Gastrocnemius medialis (tissue), 4 donors: ENCODE measurements at regions of chr1 and their contacts with region 1.

Region 1: GRCh38 chr1:67832737-67833601 is at the start of gene GNG12:
- DNase-seq: peak; percentile 52 to 59
- ATAC-seq: peak; percentile 76 to 77
- H3K4me3 ChIP-seq: peak within 1 kb of the TSS; percentile 63 to 81 (median 77)
- H3K27ac ChIP-seq: peak within 1 kb of the TSS; percentile 77 to 86 (median 82)
- H3K4me1 ChIP-seq: peaks cover 19 to 20% of the 10 kb centered on the region in 2 donors
- H3K27me3 ChIP-seq: no peaks in the 10 kb centered on the region
- CTCF ChIP-seq: no peak
- POLR2A ChIP-seq: peak; percentile 21 to 50
- total RNA-seq, gene GNG12: 17.9 to 24.5 (median 22.1) TPM

Region 2: DNA sequence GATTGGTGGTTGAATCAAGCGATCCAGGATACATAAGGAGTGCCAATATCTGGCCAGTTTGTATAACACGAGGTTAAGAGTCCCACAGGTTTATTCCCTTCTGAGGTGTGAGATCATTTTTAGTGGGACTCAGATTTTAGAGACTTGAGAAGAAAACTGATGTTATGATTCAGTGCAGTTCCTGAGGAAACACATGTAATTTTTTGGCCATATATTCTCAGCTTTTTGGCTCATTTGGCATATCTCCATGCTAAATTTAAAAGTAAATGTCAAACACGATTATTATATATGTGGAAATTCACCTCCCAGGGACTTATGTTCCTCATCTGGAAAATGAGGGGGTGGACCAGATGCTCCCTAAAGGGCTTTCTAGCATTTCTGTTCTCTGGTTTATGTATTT is 363.5 kb before region 1 on chr1:
- in situ Hi-C with region 1: no loop called
- intact Hi-C with region 1: no loop called
- DNase-seq: no peak
- ATAC-seq: no peak
- H3K4me3 ChIP-seq: no peak overlapping the region
- H3K27ac ChIP-seq: peak overlapping the region in 1 of 4 donors; percentile 70
- H3K4me1 ChIP-seq: peaks cover 18 to 26% of the 10 kb centered on the region in 2 donors
- H3K27me3 ChIP-seq: no peaks in the 10 kb centered on the region
- CTCF ChIP-seq: no peak
- POLR2A ChIP-seq: no peak

Region 3: GRCh38 chr1:67535474-67535873 is 297.5 kb before region 1 on chr1:
- in situ Hi-C with region 1: no loop called
- intact Hi-C with region 1: loop called (anchors 10 kb)
- DNase-seq: peak; percentile 59 to 74
- ATAC-seq: peak; percentile 82 to 92
- H3K4me3 ChIP-seq: no peak overlapping the region
- H3K27ac ChIP-seq: no peak overlapping the region
- H3K4me1 ChIP-seq: peaks cover 6% of the 10 kb centered on the region in 2 donors
- H3K27me3 ChIP-seq: no peaks in the 10 kb centered on the region
- CTCF ChIP-seq: peak; percentile 91 to 97 (median 92)
- POLR2A ChIP-seq: no peak

Region 4: DNA sequence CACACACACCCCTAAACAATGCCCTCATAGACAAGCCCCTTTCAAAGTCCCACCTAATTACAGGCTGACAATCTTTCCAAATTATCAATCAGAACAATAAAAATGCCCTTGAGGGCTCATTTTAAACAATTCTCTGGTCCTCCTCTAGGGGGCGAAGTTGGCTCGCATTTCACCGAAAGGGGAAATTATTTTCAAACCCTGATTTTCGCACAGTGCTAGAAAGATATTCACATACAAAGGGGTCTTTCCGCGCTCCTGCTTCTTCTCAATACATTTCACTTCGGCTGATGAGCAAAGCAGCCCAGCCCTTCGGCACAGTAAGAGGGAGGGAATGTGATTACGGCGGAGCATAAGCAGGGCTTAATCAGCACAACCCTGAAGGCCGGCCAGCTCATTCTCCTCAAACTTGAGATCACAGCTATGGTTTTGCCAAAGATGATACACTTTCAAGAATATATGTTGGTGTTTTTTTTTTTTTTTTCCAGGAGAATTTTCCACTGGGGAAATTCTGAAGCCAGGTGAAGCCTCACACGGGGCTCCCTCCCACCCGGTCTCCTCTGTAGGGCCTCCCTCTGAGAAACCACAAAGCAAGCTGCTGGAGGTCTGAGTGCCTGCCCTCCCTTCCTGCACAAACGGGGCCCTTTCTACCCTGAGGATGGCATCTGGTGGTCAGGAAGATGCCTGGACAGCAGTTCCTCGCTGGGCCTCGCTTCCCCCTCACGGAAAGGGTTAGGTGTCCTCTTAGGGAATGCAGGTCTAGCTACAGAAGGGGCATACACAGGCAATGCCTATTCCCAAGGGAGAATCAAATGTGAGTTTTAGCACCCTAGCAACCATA is 66.6 kb before region 1 on chr1:
- in situ Hi-C with region 1: no loop called
- intact Hi-C with region 1: loop called (anchors 5 kb)
- DNase-seq: peak in 1 of 2 donors; percentile 16
- ATAC-seq: peak; percentile 53 to 68
- H3K4me3 ChIP-seq: peak overlapping the region in 3 of 4 donors; percentile 21 to 48 (median 39)
- H3K27ac ChIP-seq: no peak overlapping the region
- H3K4me1 ChIP-seq: peaks cover 0 to 6% of the 10 kb centered on the region in 2 donors
- H3K27me3 ChIP-seq: no peaks in the 10 kb centered on the region
- CTCF ChIP-seq: peak; percentile 64 to 85 (median 75)
- POLR2A ChIP-seq: no peak

Region 5: DNA sequence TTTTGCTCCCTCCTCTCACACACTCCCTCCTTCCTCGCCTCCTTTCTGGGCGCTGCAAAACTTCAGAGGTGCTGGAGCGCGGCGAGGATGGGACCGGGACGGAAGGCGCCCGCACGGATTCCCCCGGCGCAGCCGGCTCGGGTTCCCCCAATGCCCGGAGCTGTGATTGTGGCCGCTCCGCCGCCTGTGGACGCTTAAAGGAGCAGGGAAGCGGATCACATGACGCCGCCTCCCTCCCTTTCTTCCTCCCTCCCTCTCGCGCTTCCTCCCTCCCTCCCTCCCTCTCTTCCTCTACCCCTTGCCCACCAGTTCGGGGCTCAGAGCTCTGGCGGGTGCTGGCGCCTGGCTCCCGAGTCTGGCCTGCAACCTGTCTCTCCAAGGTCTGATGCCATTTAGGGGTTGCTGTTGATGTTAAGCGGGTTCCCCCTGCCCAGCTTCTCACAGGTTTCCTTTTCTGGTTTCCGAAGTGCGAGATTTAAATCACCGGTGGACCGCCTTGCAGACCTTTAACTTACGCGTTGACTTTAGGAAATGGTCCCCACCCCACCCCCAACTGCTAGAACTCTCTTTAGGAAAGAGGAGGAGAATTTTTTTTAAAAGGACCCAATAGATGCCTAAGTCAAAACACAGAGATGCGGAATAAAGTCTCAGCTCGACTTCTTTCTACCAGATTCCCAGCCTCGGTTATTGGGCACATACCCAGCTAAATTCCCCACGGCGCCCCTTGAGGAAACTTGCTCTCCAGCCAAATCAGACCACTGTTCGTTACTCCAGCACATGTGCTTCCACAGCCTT is 399.6 kb after region 1 on chr1 and contains the start of gene WLS:
- in situ Hi-C with region 1: no loop called
- intact Hi-C with region 1: loop called (anchors 5 kb)
- DNase-seq: peak; percentile 70 to 71
- ATAC-seq: peak; percentile 77 to 84
- H3K4me3 ChIP-seq: peak within 1 kb of the TSS; percentile 68 to 79 (median 75)
- H3K27ac ChIP-seq: peak within 1 kb of the TSS; percentile 78 to 83 (median 80)
- H3K4me1 ChIP-seq: peaks cover 0 to 22% of the 10 kb centered on the region in 2 donors
- H3K27me3 ChIP-seq: no peaks in the 10 kb centered on the region
- CTCF ChIP-seq: peak in 2 of 5 experiments; percentile 31 to 37
- POLR2A ChIP-seq: peak; percentile 79 to 88
- total RNA-seq, gene WLS: 8.6 to 15.7 (median 11.6) TPM